Mammary epithelial cell (primary cell): ENCODE measurements at regions of chr15 and their contacts with region 1.

Region 1: GRCh38 chr15:38195191-38195901 is 57.3 kb upstream of the SPRED1 start:
- DNase-seq: no peak
- H3K4me3 ChIP-seq: no peak overlapping the region
- H3K27ac ChIP-seq: no peak overlapping the region
- H3K4me1 ChIP-seq: no peaks in the 10 kb centered on the region
- H3K27me3 ChIP-seq: no peaks in the 10 kb centered on the region
- CTCF ChIP-seq: no peak

Region 2: GRCh38 chr15:38111070-38111469 is 84.3 kb before region 1 on chr15:
- CTCF ChIA-PET with region 1: no interaction called
- dilution Hi-C with region 1: no loop called
- in situ Hi-C with region 1: no loop called
- intact Hi-C with region 1: no loop called
- DNase-seq: no peak
- H3K4me3 ChIP-seq: no peak overlapping the region
- H3K27ac ChIP-seq: no peak overlapping the region
- H3K4me1 ChIP-seq: peaks cover 5% of the 10 kb centered on the region
- H3K27me3 ChIP-seq: no peaks in the 10 kb centered on the region
- CTCF ChIP-seq: no peak

Region 3: GRCh38 chr15:38164061-38164460 is 31.3 kb before region 1 on chr15:
- CTCF ChIA-PET with region 1: no interaction called
- dilution Hi-C with region 1: no loop called
- in situ Hi-C with region 1: no loop called
- intact Hi-C with region 1: no loop called
- DNase-seq: no peak
- H3K4me3 ChIP-seq: no peak overlapping the region
- H3K27ac ChIP-seq: no peak overlapping the region
- H3K4me1 ChIP-seq: no peaks in the 10 kb centered on the region
- H3K27me3 ChIP-seq: peaks cover 10% of the 10 kb centered on the region
- CTCF ChIP-seq: no peak

Region 4: DNA sequence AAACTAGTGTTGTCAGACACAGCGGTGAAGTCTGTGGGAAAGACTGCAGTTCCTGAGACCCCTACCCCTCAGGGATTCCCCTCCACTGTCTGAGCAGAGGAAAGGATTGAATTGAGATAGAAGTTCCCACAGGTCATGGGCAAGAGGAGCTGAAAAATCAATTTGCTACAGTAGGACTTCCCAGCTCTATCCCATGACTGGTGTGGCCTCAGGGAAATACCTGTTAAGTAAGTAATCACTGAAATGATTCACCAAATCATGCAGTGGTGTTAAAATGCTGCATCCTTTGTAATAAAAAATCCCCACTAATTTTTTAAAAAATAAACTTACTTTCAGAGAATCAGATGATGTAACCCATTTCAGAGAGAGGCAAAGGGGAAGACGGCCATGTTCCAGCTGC is 12.3 kb after region 1 on chr15:
- CTCF ChIA-PET with region 1: no interaction called
- dilution Hi-C with region 1: no loop called
- in situ Hi-C with region 1: no loop called
- intact Hi-C with region 1: loop called (anchors 1 kb)
- DNase-seq: peak; percentile 77
- H3K4me3 ChIP-seq: no peak overlapping the region
- H3K27ac ChIP-seq: no peak overlapping the region
- H3K4me1 ChIP-seq: peaks cover 15% of the 10 kb centered on the region
- H3K27me3 ChIP-seq: no peaks in the 10 kb centered on the region
- CTCF ChIP-seq: no peak

Region 5: DNA sequence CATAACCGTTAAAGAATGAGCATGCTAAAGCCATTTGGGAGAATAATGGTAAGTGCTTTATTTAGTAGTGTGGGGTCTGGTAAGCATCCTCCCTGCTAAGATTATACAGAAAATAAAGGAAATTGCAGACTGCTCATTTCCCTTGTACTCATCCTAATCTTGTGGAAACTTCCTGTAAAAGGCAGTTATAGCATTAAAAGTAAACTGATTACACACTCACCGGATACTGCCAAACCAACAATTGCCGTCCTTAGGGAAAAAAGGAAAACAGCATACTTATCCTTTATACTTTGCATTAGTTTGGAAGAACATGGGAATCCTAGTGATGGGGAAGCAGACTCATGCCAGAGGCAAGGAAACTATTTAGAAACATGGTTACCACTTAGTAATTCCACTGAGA is 52.0 kb after region 1 on chr15:
- CTCF ChIA-PET with region 1: no interaction called
- dilution Hi-C with region 1: loop called (anchors 5 kb)
- in situ Hi-C with region 1: no loop called
- intact Hi-C with region 1: no loop called
- DNase-seq: no peak
- H3K4me3 ChIP-seq: no peak overlapping the region
- H3K27ac ChIP-seq: no peak overlapping the region
- H3K4me1 ChIP-seq: peaks cover 7% of the 10 kb centered on the region
- H3K27me3 ChIP-seq: no peaks in the 10 kb centered on the region
- CTCF ChIP-seq: no peak

Region 6: GRCh38 chr15:38271895-38272294 is 76.5 kb after region 1 on chr15:
- CTCF ChIA-PET with region 1: no interaction called
- dilution Hi-C with region 1: no loop called
- in situ Hi-C with region 1: no loop called
- intact Hi-C with region 1: loop called (anchors 2 kb)
- DNase-seq: no peak
- H3K4me3 ChIP-seq: no peak overlapping the region
- H3K27ac ChIP-seq: no peak overlapping the region
- H3K4me1 ChIP-seq: peaks cover 10% of the 10 kb centered on the region
- H3K27me3 ChIP-seq: no peaks in the 10 kb centered on the region
- CTCF ChIP-seq: no peak